ENCODE measurements at regions of chr1 and their contacts with region 1.

Region 1: DNA sequence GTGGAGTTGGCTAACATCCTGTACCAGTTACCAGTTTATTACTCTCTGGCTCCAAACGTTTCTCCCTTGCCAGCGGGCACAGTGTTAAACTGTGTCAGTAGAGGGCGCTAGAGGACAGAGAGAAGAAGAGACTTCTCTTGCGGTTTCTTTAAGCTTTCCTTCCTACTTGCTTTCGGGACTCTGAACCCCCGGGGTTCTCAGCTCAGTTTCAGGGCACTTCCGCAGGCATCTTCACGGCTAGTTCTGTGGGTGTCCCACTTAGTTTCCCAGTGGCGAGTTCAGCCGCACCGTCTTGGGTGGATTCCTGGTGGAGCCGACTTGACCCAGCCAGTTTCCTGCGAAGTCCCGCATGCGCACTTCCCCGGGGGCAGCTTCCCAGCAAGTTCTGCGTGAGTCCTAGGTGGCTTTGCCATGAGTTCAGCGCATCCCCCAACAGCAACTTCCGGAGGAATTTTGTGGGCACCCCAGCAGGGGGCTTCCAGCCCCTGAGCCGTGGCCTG is 37.9 kb upstream of the BTG2 start:
- DNase-seq: peak; percentile 66 to 92 (median 82)
- ATAC-seq: peak; percentile 58
- H3K4me3 ChIP-seq: peak overlapping the region; percentile 67 to 76
- H3K4me3 Mint-ChIP-seq: peak overlapping the region; percentile 89
- H3K27ac ChIP-seq: peak overlapping the region; percentile 50 to 68
- H3K27ac Mint-ChIP-seq: peak overlapping the region; percentile 82
- H3K4me1 ChIP-seq: peaks cover 25% of the 10 kb centered on the region
- H3K4me1 Mint-ChIP-seq: peaks cover 20% of the 10 kb centered on the region
- H3K27me3 ChIP-seq: no peaks in the 10 kb centered on the region
- H3K27me3 Mint-ChIP-seq: no peaks in the 10 kb centered on the region
- CTCF ChIP-seq: peak; percentile 95

Region 2: DNA sequence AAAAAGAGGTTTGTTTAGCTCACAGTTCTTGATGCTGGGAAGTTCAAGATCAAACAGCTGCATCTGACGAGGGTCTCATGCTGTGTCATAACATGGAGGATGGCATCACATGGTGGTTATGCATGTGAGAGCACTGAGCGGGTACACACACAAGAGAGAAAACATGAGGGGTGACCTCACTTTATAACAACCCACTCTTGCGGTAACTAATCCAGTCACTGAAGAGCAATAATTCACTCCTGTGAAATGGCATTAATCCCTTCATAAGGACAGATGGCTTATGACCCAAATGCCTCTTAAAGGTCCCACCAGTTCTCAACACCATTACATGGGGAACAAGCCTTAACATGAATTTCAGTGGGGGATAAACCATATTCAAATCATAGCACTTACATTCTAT is 14.7 kb before region 1 on chr1:
- CTCF ChIA-PET with region 1: interaction called, 12 read pairs
- POLR2A ChIA-PET with region 1: no interaction called
- intact Hi-C with region 1: no loop called
- DNase-seq: no peak
- ATAC-seq: no peak
- H3K4me3 ChIP-seq: no peak overlapping the region
- H3K4me3 Mint-ChIP-seq: no peak overlapping the region
- H3K27ac ChIP-seq: no peak overlapping the region
- H3K27ac Mint-ChIP-seq: no peak overlapping the region
- H3K4me1 ChIP-seq: no peaks in the 10 kb centered on the region
- H3K4me1 Mint-ChIP-seq: no peaks in the 10 kb centered on the region
- H3K27me3 ChIP-seq: no peaks in the 10 kb centered on the region
- H3K27me3 Mint-ChIP-seq: peaks cover 27% of the 10 kb centered on the region
- CTCF ChIP-seq: no peak

Region 3: DNA sequence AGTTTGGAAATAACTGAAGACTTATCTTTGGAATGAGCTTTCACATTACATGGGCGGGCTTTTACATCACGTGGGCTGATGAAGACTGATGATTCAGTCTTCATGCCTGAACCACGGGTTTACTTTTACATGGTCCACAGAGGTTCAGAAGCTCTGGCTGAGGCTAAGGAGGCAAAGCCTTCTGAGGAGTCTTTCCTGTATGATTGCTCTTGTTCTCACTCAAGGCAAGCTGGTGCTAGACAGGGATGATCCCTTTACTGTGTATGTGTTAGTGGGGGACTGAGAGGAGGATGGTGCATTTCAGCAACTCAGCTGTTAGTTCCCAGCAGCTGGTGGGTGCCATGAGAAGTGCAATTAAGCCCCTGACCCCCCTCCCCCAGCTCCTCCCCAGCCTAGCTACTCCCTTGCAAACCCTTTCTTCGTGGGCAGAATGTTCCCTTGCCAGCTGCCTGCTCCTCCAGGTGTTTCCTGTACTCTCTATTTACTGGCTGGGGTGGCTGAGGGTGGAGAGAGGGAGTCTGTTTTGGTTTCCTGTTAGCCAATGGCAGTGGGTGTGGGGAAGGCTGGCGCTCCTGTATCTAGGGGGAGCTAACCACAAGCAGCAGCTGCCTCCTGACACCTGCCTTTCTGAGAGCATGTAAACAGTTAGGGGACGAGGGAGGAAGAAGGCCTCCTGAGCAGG is 53.3 kb after region 1 on chr1:
- CTCF ChIA-PET with region 1: interaction called, 207 read pairs
- POLR2A ChIA-PET with region 1: interaction called, 92 read pairs
- intact Hi-C with region 1: no loop called
- DNase-seq: peak; percentile 50 to 91 (median 82)
- ATAC-seq: peak; percentile 62
- H3K4me3 ChIP-seq: peak overlapping the region in 1 of 2 experiments; percentile 12
- H3K4me3 Mint-ChIP-seq: peak overlapping the region; percentile 69
- H3K27ac ChIP-seq: peak overlapping the region; percentile 53 to 80
- H3K27ac Mint-ChIP-seq: peak overlapping the region; percentile 93
- H3K4me1 ChIP-seq: peaks cover 73% of the 10 kb centered on the region
- H3K4me1 Mint-ChIP-seq: peaks cover 88% of the 10 kb centered on the region
- H3K27me3 ChIP-seq: no peaks in the 10 kb centered on the region
- H3K27me3 Mint-ChIP-seq: no peaks in the 10 kb centered on the region
- CTCF ChIP-seq: no peak

Region 4: DNA sequence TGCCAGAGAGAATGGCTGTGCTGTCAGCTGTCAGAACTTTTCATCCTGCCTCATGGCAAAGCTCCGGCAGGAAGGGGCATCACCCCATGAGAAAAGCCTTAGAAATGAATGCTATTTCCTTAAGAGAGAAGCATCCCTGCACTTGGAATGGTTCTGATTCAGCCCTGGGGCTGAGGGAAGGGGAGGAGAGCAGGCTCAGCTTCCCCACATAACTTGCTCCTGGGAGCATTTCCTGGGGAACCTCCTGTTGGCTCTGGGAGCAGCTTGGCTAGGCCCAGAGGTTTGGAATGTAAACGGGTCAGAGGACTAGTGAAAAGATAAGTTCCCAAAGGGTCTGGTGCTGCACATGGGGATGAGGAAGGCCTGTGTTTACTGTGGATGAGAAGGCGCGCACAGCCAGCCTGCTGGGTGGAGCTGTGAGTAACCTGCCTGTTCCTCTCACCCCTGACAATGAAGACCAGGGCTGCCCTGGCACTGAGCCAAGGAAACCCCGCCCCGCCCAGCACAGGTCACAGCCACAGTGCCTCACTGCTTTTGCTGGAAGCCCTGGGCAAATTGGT is 213.2 kb after region 1 on chr1:
- CTCF ChIA-PET with region 1: interaction called, 310 read pairs
- POLR2A ChIA-PET with region 1: no interaction called
- intact Hi-C with region 1: no loop called
- DNase-seq: peak; percentile 4 to 63 (median 51)
- ATAC-seq: peak; percentile 56
- H3K4me3 ChIP-seq: no peak overlapping the region
- H3K4me3 Mint-ChIP-seq: no peak overlapping the region
- H3K27ac ChIP-seq: no peak overlapping the region
- H3K27ac Mint-ChIP-seq: no peak overlapping the region
- H3K4me1 ChIP-seq: no peaks in the 10 kb centered on the region
- H3K4me1 Mint-ChIP-seq: peaks cover 5% of the 10 kb centered on the region
- H3K27me3 ChIP-seq: no peaks in the 10 kb centered on the region
- H3K27me3 Mint-ChIP-seq: peaks cover 8% of the 10 kb centered on the region
- CTCF ChIP-seq: no peak

Region 5: GRCh38 chr1:203609979-203610493 is 342.6 kb after region 1 on chr1:
- CTCF ChIA-PET with region 1: no interaction called
- POLR2A ChIA-PET with region 1: no interaction called
- intact Hi-C with region 1: no loop called
- DNase-seq: no peak
- ATAC-seq: no peak
- H3K4me3 ChIP-seq: no peak overlapping the region
- H3K4me3 Mint-ChIP-seq: no peak overlapping the region
- H3K27ac ChIP-seq: no peak overlapping the region
- H3K27ac Mint-ChIP-seq: no peak overlapping the region
- H3K4me1 ChIP-seq: peaks cover 30% of the 10 kb centered on the region
- H3K4me1 Mint-ChIP-seq: peaks cover 51% of the 10 kb centered on the region
- H3K27me3 ChIP-seq: no peaks in the 10 kb centered on the region
- H3K27me3 Mint-ChIP-seq: no peaks in the 10 kb centered on the region
- CTCF ChIP-seq: no peak

Region 6: DNA sequence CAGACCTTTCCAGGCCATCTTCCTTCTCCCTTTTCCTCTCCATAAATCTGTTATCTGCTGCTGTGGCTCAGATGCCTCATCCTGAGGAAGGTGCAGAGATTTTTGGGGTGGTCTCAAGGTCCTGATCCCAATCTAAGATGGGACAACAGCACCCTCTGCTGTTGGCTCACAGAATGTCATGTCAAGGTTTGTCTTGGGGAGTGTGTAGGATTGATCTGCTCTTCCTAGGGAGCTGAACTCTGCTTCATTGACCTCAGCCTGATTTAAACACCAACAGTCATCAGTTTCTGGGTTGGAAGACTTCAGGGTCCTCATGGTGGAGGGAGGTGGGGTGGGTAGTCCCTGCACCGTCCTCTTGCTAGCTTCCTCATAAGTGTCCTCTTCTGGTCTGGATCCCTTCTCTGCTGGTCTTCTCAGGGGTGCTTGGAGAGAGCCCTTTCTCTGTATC is 434.8 kb after region 1 on chr1:
- CTCF ChIA-PET with region 1: interaction called, 9 read pairs
- POLR2A ChIA-PET with region 1: no interaction called
- intact Hi-C with region 1: loop called (anchors 1 to 5 kb)
- DNase-seq: peak; percentile 33 to 84 (median 75)
- ATAC-seq: peak; percentile 70
- H3K4me3 ChIP-seq: no peak overlapping the region
- H3K4me3 Mint-ChIP-seq: no peak overlapping the region
- H3K27ac ChIP-seq: peak overlapping the region in 1 of 2 experiments; percentile 29
- H3K27ac Mint-ChIP-seq: peak overlapping the region; percentile 69
- H3K4me1 ChIP-seq: no peaks in the 10 kb centered on the region
- H3K4me1 Mint-ChIP-seq: peaks cover 4% of the 10 kb centered on the region
- H3K27me3 ChIP-seq: no peaks in the 10 kb centered on the region
- H3K27me3 Mint-ChIP-seq: no peaks in the 10 kb centered on the region
- CTCF ChIP-seq: peak; percentile 91